Testis (tissue), 5 donors: ENCODE measurements at regions of chr6 and their contacts with region 1.

Region 1: DNA sequence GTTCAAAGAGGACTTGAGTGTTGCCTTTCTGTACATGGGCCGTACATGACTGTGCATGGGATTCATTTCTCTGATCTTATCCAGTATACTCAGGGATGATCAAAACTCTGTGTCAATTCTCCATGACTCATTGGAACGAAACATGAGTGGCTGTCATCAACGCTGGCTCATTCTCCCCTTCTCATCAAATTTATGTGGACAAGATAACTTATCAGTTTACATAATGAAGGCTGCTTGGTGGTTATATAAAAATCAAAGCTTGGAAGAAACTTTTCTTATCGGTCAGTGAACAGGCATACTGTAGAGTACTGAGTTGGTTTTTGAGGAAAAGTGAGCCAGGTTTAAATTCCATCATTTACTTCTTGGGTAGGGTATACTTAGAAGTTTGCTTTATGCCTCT is 24.9 kb downstream of the CRISP1 start:
- DNase-seq: no peak
- H3K4me3 ChIP-seq: no peak overlapping the region
- H3K27ac ChIP-seq: no peak overlapping the region
- H3K4me1 ChIP-seq: no peaks in the 10 kb centered on the region
- H3K27me3 ChIP-seq: no peaks in the 10 kb centered on the region
- CTCF ChIP-seq: no peak
- POLR2A ChIP-seq: no peak

Region 2: DNA sequence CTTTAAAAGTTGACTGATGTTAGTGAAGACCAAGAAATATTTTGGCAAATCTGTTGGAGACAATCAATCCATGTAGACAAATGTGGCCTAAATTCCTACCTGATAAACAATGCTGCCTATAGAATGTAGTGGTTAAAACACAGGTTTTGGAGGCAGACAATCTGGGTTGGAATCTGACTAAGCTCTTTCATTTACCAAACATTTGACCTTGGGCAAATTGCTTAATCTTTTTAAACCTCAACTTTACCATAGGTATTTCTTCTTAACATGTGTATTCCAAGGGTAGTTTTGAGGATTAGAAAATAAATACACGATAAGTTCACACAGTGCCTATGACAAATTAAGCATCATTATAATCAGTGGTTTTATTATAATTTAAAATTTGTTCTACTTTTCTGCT is 216.3 kb before region 1 on chr6:
- intact Hi-C with region 1: loop called (anchors 5 kb)
- DNase-seq: no peak
- H3K4me3 ChIP-seq: no peak overlapping the region
- H3K27ac ChIP-seq: no peak overlapping the region
- H3K4me1 ChIP-seq: no peaks in the 10 kb centered on the region
- H3K27me3 ChIP-seq: no peaks in the 10 kb centered on the region
- CTCF ChIP-seq: no peak
- POLR2A ChIP-seq: no peak